Tibial artery (tissue), 4 donors: ENCODE measurements at regions of chr9 and their contacts with region 1.

Region 1: DNA sequence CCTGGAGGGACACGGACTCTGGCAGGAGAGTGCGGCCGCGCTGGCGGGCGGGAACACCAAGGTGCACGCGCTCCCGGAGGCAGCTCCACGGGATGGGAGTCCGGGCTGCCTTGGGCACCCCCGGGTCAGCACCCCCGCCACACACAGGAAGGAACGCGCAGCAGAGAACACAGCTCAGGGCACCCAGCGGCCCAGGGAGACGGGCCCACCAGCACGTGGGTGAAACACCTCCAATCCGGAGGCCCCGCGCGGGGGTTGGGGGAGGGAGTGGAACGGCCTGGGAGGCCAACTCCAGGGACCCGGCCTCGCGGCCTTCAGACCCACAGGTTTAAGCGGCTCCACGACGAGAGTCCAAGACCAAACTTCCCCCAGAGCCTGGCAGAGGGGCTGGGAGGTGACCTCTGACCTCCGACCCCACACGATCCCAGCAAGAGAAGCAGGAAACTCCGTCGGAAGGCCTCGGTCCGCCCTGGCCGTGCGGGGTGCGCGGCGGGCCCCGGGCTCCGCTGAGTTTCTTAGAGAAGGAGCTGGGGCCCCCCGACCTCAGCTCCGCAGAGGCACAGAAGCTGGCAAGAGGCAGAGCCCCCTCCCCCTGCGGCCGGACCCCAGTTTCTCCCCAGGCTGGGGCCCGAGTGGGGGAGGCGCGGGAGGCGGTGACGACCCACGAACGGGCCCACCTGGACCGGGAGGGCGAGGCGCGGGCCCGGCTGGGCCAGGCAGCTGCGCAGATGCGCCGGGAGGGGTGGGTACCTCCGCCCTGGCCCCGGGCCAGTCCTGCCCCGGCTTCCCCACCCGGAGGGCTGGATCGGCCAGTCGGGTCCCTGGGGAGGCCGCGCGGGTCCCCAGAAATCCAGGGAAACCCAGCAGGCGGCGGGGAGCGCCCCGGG is 851 bp downstream of the NACC2 start:
- DNase-seq: peak; percentile 74 to 93
- H3K4me3 ChIP-seq: peak overlapping the region; percentile 85
- H3K27ac ChIP-seq: peak overlapping the region; percentile 96
- H3K4me1 ChIP-seq: peaks cover 16 to 59% (median 56%) of the 10 kb centered on the region in 4 donors
- H3K27me3 ChIP-seq: peaks cover 0 to 9% of the 10 kb centered on the region in 2 donors
- CTCF ChIP-seq: peak; percentile 6 to 12

Region 2: DNA sequence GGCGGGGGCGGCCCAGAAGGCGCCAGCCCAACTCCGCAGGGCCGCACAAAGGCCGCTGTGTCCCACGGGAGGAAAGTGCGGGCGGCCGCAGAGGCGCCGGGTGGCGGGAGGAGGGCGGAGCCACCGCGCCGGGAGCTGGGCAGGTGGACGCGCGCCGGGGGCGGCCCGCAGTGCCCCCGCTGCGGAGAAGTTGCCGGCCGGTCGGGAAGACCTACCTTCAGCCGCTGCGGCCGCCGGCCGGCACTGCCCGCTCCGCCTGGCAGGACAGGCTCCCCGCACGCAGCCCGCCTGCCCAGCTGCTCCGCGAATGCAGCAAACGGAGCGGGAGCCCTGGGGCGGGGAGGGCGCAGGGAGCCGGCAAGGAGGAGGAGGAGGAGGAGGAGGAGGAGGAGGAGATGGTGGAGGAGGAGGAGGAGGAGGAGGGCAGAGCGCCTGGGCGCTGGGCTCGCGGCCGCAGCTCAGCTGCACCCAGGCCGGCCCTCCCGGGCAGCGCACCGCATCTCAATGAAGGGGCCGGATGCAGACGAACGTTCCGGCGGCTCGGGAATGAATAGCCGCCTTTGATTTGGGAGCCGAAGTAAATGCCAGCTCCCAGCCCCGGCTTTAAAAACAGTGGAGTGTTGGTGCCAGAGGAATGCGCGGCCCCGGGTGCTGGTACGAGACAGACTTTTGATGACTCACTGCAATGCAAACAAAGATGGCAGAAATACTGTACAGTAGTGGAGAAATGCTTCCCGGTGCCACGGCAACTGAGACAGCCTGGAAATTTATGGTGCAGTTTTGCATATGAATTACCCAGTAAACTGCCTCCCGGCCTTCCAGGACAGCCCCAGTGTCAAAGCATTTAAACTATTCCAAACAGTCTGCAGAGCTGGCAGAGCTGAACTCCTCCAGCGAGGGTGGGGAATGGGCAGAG is 42.5 kb before region 1 on chr9:
- intact Hi-C with region 1: loop called (anchors 5 kb)
- DNase-seq: peak in 1 of 2 donors; percentile 78
- H3K4me3 ChIP-seq: peak overlapping the region; percentile 46 to 63
- H3K27ac ChIP-seq: peak overlapping the region; percentile 62
- H3K4me1 ChIP-seq: peaks cover 0 to 80% (median 56%) of the 10 kb centered on the region in 4 donors
- H3K27me3 ChIP-seq: no peaks in the 10 kb centered on the region
- CTCF ChIP-seq: no peak

Region 3: DNA sequence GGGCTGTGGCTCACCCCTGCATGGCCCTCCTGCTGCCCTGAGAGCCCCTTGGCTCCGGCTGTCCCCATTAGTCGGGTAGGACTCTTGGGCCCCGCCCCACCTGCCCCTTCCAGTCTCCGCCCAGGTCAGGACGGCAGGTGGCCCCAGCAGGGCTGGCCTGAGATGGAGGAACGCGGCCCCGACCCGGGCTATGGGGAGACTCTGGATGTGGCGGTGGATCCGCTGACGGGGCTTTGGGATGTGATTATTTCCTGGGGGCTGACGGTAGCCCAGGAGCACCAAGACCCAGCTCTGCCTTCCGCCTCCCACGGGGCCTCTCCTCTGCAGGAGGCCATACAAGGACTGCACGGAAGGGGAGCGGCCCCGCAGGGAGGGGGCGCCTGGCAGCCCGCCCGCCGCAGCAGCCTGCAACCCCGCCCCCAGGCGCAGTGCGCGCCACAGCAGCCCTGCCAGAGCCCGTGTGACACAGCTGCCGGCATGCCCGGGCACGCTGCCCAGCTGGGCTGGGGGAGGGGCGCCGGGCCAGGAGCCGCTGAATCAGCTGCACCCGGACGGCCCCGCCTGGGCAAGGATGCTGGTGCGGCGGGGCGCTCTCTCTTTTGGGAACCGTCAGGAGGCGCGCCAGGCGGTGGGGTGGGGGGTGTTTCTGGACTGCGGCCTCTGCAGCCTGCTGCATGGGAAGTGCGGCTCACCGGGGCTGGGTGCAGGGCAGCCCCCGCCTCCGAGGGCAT is 15.3 kb after region 1 on chr9:
- intact Hi-C with region 1: loop called (anchors 2 kb)
- DNase-seq: peak; percentile 91 to 98
- H3K4me3 ChIP-seq: peak overlapping the region; percentile 37 to 48
- H3K27ac ChIP-seq: peak overlapping the region; percentile 70 to 79
- H3K4me1 ChIP-seq: peaks cover 0 to 53% (median 43%) of the 10 kb centered on the region in 4 donors
- H3K27me3 ChIP-seq: no peaks in the 10 kb centered on the region
- CTCF ChIP-seq: peak in 1 of 2 experiments; percentile 16

Region 4: DNA sequence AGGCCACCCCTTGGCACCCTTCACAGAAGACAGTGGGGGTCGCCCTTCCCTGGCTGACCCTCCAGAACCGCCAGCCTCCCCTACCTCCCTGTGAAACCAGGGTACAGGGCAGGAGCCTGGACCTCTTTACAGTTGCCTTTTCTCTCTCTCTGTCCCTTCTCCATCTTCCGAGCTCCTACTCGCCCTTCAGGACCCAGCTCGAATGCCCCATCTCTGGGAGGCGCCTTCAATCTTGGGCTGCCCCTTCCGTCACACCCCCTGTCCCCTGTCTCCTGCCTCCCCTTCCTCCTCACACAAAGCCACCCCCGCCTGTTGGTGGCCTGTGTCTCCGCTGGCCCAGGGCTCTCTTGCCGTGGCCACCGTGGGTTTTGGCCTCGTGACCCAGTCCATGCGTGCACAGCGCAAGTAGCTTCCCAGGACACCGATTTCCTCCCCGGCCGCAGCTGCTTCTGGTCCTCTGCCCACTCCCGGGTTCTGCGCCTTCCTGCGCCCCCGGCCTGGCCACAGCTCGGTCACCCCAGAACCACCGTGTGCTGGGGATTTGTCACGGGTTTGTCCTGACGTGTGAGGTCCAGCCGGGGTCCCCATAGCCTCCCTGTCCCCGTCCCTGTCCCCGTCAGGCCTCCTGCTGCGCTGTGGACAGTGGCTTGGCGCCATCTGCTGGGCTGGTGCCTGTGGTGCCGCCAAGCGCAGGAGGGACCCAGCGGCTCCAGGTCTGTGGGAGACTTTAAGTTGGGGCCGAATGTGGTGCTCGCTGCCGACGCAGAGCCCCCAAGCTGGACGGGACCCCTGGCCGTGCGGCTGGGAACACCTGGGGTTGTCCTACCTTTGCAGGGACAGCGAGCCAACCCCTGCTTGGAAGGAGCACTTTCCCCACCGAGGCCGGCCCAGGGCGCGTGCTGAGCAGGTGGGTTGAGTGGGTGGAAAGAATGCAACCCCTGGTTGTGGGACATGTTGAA is 28.5 kb after region 1 on chr9:
- intact Hi-C with region 1: loop called (anchors 5 kb)
- DNase-seq: peak; percentile 67 to 83
- H3K4me3 ChIP-seq: no peak overlapping the region
- H3K27ac ChIP-seq: no peak overlapping the region
- H3K4me1 ChIP-seq: peaks cover 0 to 23% (median 16%) of the 10 kb centered on the region in 4 donors
- H3K27me3 ChIP-seq: peaks cover 0 to 29% of the 10 kb centered on the region in 2 donors
- CTCF ChIP-seq: peak; percentile 97 to 99

Region 5: GRCh38 chr9:136189394-136190236 is 95.4 kb after region 1 on chr9:
- intact Hi-C with region 1: no loop called
- DNase-seq: no peak
- H3K4me3 ChIP-seq: no peak overlapping the region
- H3K27ac ChIP-seq: no peak overlapping the region
- H3K4me1 ChIP-seq: peaks cover 0 to 15% (median 4%) of the 10 kb centered on the region in 4 donors
- H3K27me3 ChIP-seq: peaks cover 0 to 97% of the 10 kb centered on the region in 2 donors
- CTCF ChIP-seq: no peak